ENCODE measurements at regions of chr3 and their contacts with region 1.

Region 1: DNA sequence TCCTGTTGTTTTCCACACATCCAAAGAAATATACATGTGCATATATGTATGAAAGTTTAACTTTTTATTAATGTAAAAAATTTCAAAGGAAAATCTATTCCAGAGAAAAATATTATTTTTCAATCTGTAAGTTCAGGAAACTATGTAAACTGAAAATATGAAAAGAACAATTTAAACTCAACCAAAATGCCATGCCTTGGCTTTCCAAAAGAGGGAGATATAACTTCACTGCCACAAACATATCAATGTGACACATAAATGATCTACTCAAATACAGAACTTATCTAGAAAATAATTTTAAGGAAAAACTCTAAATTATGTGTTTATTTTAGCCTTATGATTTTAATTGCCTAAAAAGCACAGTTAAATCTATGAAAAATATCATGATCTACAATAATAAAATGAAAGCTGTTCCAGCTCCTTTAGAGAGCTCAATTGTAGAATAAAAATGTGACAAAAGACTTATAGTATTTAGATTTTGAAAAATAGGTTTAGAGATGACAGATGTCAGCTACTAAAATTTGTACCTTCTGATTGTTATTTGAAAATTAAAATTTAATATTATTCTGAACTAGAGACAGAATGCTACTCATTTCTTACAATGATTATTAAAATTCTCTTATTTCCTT is 94.8 kb downstream of the GBE1 start:
- DNase-seq: peak; percentile 39
- H3K4me3 Mint-ChIP-seq: no peak overlapping the region
- H3K27ac Mint-ChIP-seq: no peak overlapping the region
- H3K4me1 Mint-ChIP-seq: no peaks in the 10 kb centered on the region
- H3K27me3 Mint-ChIP-seq: no peaks in the 10 kb centered on the region
- CTCF ChIP-seq: peak; percentile 67

Region 2: GRCh38 chr3:81638480-81638879 is 28.1 kb before region 1 on chr3:
- CTCF ChIA-PET with region 1: no interaction called
- POLR2A ChIA-PET with region 1: no interaction called
- intact Hi-C with region 1: no loop called
- DNase-seq: no peak
- H3K4me3 Mint-ChIP-seq: no peak overlapping the region
- H3K27ac Mint-ChIP-seq: no peak overlapping the region
- H3K4me1 Mint-ChIP-seq: no peaks in the 10 kb centered on the region
- H3K27me3 Mint-ChIP-seq: no peaks in the 10 kb centered on the region
- CTCF ChIP-seq: no peak

Region 3: DNA sequence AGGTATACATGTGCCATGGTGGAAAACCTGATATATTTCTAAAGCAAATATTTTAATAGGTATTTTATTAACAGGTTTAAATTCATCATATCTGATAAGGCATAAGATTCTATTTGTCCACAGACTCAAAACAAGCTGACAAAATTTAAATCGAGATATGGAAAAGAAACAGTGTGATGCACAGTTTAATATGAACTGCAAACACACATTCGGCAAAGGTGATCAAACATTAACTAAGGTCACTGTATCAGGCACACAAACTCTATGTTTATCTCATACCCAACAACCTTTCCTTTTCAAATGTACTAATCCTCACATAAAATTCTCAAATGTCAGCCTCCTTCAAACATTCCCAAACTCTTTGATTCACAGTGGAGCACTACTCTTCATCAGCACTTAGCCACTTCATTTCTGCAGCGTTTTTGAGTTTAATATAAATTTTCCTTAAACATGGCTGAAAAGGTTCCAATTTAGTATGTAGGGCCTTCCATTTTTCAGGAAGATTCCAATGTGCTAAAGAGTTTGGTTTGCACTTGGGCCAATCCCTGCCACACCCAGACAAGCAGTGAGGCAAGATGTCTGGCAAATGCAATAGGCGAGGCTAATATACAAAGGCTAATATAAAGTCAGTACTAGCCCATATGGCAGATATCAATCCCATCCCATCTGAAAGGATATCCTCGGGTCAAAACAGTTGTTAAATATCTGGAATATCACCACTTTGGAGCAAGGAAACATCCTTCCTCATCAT is 10.3 kb after region 1 on chr3:
- CTCF ChIA-PET with region 1: interaction called, 11 read pairs
- POLR2A ChIA-PET with region 1: no interaction called
- intact Hi-C with region 1: no loop called
- DNase-seq: no peak
- H3K4me3 Mint-ChIP-seq: no peak overlapping the region
- H3K27ac Mint-ChIP-seq: no peak overlapping the region
- H3K4me1 Mint-ChIP-seq: peaks cover 11% of the 10 kb centered on the region
- H3K27me3 Mint-ChIP-seq: no peaks in the 10 kb centered on the region
- CTCF ChIP-seq: no peak

Region 4: GRCh38 chr3:81728766-81729544 is 62.3 kb after region 1 on chr3:
- CTCF ChIA-PET with region 1: interaction called, 10 read pairs
- POLR2A ChIA-PET with region 1: no interaction called
- intact Hi-C with region 1: no loop called
- DNase-seq: peak; percentile 54
- H3K4me3 Mint-ChIP-seq: peak overlapping the region; percentile 29
- H3K27ac Mint-ChIP-seq: peak overlapping the region; percentile 5
- H3K4me1 Mint-ChIP-seq: peaks cover 49% of the 10 kb centered on the region
- H3K27me3 Mint-ChIP-seq: no peaks in the 10 kb centered on the region
- CTCF ChIP-seq: no peak

Region 5: GRCh38 chr3:81760924-81761903 is 94.6 kb after region 1 on chr3 and contains the start of gene GBE1:
- CTCF ChIA-PET with region 1: interaction called, 4 read pairs
- POLR2A ChIA-PET with region 1: interaction called, 4 read pairs
- intact Hi-C with region 1: loop called (anchors 2 kb)
- DNase-seq: peak; percentile 98
- H3K4me3 Mint-ChIP-seq: peak within 1 kb of the TSS; percentile 77
- H3K27ac Mint-ChIP-seq: peak within 1 kb of the TSS; percentile 94
- H3K4me1 Mint-ChIP-seq: peaks cover 56% of the 10 kb centered on the region
- H3K27me3 Mint-ChIP-seq: no peaks in the 10 kb centered on the region
- CTCF ChIP-seq: peak; percentile 24
- total RNA-seq, gene GBE1: 41.8 and 58.1 TPM in 2 replicates

Measured in MCF 10A (cell line).